BJ (cell line): ENCODE measurements at regions of chr17 and their contacts with region 1.

Region 1: GRCh38 chr17:5304636-5305035 is 22.6 kb downstream of the RABEP1 start:
- DNase-seq: no peak
- H3K4me3 ChIP-seq: no peak overlapping the region
- H3K27me3 ChIP-seq: no peaks in the 10 kb centered on the region
- CTCF ChIP-seq: no peak

Region 2: DNA sequence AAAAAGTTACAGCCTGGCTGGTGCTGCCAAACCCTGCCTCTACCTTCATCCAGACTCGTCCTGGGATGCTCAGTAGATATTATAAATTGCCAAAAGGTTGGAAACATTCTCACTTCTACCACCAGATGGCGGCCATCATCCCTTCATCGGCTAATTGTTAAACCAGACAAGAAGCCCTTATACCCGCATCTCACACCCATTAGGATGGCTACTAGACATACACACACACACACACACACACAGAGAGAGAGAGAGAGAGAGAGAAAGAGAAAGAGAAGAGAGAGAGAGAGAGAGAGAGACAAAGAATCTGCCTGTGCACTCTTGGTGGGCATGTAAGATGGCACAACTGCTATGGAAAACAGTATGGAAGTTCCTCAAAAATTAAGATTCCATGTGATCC is 55.0 kb before region 1 on chr17:
- CTCF ChIA-PET with region 1: interaction called, 11 read pairs
- POLR2A ChIA-PET with region 1: no interaction called
- DNase-seq: peak; percentile 19
- H3K4me3 ChIP-seq: no peak overlapping the region
- H3K27me3 ChIP-seq: no peaks in the 10 kb centered on the region; the same call in 1 of the 2 replicates
- CTCF ChIP-seq: peak; percentile 66